ENCODE measurements at regions of chr5 and their contacts with region 1.

Region 1: GRCh38 chr5:8196061-8196460 is 327.1 kb downstream of the MTRR start:
- DNase-seq: no peak
- H3K4me3 ChIP-seq: no peak overlapping the region
- H3K27ac ChIP-seq: no peak overlapping the region
- H3K4me1 ChIP-seq: no peaks in the 10 kb centered on the region
- H3K27me3 ChIP-seq: no peaks in the 10 kb centered on the region
- CTCF ChIP-seq: no peak

Region 2: DNA sequence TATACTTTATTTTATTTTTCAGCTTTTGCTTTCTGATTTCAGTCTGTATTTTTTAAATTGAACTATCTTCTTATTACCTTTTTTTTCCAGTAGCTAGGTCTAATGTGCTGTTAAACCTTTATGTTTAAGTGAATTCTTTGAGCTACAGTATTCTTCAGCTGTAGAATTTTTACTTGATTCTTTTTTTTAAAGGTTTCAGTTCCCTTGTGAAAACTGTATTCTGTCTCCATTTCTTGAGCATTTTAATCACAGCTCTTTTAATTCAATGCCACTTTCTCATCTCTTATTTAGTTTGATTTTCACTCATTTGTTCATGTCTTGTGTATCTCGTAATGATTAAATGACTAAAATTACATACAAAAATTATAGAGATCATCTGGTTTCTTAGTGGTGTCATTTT is 93.3 kb before region 1 on chr5:
- CTCF ChIA-PET with region 1: no interaction called
- POLR2A ChIA-PET with region 1: interaction called, 24 read pairs
- intact Hi-C with region 1: no loop called
- DNase-seq: no peak
- H3K4me3 ChIP-seq: no peak overlapping the region
- H3K27ac ChIP-seq: no peak overlapping the region
- H3K4me1 ChIP-seq: no peaks in the 10 kb centered on the region
- H3K27me3 ChIP-seq: no peaks in the 10 kb centered on the region
- CTCF ChIP-seq: no peak

Region 3: DNA sequence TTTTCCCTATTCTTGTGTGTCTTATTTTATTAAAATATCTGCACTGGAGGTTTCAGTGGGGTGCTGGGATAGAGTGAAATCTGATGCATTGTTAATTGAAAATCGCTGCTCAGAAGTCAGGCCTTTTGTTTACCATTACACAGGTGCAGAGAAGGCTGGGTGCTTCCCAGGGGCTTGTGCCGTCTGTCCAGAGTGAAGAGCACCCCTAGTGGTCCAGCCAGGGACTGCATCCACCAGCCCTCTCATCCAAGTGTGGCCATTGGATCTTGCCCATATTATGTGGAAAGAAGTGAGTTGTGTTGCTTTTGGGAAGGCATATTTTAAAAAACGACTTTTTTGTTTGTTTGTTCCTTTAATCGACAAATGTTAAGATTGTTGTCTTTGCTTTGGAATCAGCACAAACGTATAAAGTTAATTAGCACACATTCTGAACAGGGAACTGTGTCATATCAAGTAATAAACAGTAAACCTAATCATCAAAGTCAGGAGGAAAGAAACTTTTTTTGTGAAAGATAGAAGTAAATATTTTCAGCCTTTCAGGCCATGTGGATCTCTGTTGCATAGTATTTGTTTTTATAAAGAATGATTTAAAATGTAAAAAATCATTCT is 11.5 kb before region 1 on chr5:
- CTCF ChIA-PET with region 1: no interaction called
- POLR2A ChIA-PET with region 1: no interaction called
- intact Hi-C with region 1: no loop called
- DNase-seq: peak; percentile 36
- H3K4me3 ChIP-seq: no peak overlapping the region
- H3K27ac ChIP-seq: no peak overlapping the region
- H3K4me1 ChIP-seq: no peaks in the 10 kb centered on the region
- H3K27me3 ChIP-seq: no peaks in the 10 kb centered on the region
- CTCF ChIP-seq: peak; percentile 72

Measured in A673 (cell line).